Activated B cell treated with CpG ODN at 0.5 μM for 24 hours (primary cell): ENCODE measurements at regions of chr19 and their contacts with region 1.

Region 1: DNA sequence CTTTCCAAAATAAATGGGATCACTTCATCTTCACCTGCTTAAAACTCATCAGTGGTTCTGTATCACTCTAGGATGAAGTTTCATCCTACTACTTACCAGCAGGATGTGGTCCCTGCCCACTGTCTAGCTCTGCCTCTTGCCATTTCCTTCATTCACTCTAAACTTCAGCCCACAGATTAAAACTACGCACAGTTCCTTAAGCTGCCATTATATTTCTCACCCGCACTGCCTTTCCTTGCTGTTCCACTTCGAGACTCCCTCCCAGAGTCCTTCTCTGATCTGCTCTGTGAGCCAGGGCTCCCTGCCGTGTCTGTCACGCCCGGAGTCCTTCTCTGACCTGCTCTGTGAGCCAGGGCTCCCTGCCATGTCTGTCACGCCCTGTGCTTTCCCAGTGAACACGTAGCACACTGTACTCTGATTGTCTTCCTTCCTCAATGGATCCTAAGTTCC is 52.0 kb upstream of the NPAS1 start:
- DNase-seq: no peak
- ATAC-seq: no peak
- H3K4me3 Mint-ChIP-seq: no peak overlapping the region
- H3K27ac Mint-ChIP-seq: no peak overlapping the region
- H3K4me1 Mint-ChIP-seq: no peaks in the 10 kb centered on the region
- H3K27me3 Mint-ChIP-seq: no peaks in the 10 kb centered on the region
- CTCF ChIP-seq: no peak

Region 2: DNA sequence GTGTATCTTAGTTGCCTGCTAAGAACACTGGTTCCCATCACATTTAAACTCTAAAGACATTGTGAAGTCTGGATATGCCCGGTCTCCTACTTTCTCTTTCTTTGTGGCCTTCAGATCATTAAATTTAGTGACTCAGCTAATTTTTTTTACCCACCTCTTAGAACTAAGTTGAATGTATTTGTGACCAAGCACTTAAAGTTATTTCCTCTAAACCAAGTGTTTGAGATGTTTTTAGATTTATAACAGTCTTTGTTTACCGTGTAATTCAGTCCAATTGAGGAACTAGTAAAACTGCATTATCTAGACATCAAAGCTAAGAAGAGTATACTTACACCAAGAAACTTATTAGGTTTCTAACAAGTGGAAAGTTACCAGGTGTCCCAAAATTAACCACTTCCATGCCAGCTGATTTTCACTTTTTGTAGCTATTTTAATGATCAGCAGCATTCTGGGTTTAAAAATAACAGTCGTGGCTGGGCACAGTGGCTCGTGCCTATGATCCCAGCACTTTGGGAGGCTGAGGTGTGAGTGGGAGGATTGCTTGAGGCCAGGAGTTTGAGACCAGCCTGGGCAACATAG is 53.7 kb before region 1 on chr19:
- CTCF ChIA-PET with region 1: no interaction called
- POLR2A ChIA-PET with region 1: interaction called, 3 read pairs
- intact Hi-C with region 1: loop called (anchors 10 kb)
- DNase-seq: no peak
- ATAC-seq: no peak
- H3K4me3 Mint-ChIP-seq: no peak overlapping the region
- H3K27ac Mint-ChIP-seq: no peak overlapping the region
- H3K4me1 Mint-ChIP-seq: peaks cover 50% of the 10 kb centered on the region
- H3K27me3 Mint-ChIP-seq: no peaks in the 10 kb centered on the region
- CTCF ChIP-seq: no peak